ENCODE measurements at regions of chr19 and their contacts with region 1.

Region 1: DNA sequence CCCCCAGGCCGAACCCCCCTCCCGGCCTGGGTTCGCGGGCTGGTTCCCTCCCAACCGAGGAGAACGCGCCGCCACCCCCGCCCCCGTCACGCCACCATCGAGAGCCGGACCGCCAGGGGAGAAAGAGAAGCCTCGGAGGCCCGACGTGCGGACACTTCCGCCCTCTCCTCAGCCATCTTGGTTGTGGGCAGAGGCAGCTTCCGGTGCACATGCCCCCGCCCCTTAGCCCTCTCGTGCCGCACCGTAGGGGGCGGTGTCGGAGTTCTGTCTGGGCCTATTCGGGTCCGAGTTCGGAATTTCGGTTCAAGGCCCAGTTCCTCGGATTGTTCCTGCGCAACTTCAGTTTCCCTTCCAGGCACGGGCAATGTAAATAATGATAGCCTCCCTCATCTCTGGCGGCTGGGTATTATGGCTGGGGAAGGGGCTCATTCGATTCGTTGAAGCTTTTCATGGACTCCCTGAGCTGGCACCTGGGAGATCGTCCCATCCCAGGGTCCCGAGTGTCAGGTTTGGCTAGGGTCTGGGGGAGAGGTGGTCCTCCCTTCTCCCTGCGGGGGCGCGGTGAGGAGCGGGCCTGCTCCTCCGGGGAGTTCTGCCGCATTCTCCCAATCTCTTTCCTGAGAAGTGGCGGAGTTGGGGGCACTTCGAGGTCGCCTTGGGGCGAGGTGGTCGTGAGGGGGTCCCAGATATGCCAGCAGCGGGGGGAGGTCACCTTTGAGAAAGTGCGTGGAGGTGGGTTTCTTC is at the starts of genes IER2 and STX10:
- DNase-seq: peak; percentile 76
- H3K4me3 ChIP-seq: peak within 1 kb of the TSS; percentile 88
- H3K27me3 ChIP-seq: no peaks in the 10 kb centered on the region
- CTCF ChIP-seq: peak; percentile 76
- polyA plus RNA-seq, gene IER2: 9.1 and 18.2 TPM in 2 replicates
- polyA plus RNA-seq, gene STX10: 56.8 and 73.1 TPM in 2 replicates

Region 2: DNA sequence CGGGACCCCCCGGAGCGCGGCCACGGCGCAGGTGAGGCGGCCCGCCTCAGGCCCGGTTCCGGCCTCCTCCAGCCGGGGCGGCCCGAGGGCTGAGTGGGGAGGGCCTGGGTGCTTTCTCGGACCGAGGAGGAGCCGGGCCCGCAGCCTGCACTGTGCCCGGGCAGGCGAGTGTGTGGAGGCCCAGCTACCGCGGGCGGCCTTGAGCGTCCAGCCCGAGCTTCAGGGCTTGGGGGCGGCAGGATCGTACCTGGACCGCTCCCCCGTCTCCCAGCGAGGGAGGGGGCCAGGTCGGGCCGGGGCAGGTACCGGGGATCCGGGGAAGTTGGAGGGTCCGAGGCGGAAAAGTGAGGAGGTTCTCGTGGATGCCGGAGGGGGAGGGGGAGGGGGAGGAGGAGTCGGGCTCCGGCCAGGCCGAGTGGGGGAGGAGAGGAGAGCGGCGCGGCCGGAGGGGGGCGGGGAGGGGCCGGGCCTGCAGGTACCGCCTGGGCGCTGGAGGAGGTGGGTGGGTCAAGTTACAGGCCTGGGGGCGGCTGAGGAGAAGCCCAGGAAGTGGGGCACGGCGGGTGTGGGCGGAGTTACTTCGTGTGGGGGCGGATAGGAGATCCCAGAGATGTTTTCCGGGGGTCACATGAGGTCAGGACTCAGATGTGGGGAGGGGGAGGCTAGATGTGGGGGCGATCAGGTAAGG is 31.8 kb before region 1 on chr19:
- CTCF ChIA-PET with region 1: interaction called, 10 read pairs
- POLR2A ChIA-PET with region 1: no interaction called
- DNase-seq: no peak
- H3K4me3 ChIP-seq: peak overlapping the region; percentile 98
- H3K27me3 ChIP-seq: no peaks in the 10 kb centered on the region
- CTCF ChIP-seq: no peak